ENCODE measurements at regions of chr3 and their contacts with region 1.

Region 1: GRCh38 chr3:113136071-113136470 is 75.3 kb upstream of the BOC start:
- DNase-seq: no peak
- CTCF ChIP-seq: peak; percentile 24

Region 2: DNA sequence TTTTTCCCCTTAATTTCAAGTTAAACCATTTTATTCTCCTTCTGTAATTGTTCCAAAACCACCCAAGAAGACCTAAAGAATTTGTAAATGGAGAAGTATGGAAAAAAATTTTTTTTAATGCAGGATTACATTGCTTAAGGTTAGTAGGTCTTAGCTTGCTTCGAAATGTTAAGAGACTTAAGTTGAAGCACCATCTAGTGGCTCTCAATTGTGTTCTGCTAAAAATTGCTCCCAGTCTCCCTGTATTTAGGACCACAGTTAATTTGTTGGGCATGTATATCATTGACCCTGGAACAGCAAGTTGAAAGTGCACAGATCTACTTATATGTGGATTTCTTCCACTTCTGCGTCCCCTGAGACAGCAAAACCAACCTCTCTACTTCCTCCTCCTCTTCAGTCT is 321.8 kb before region 1 on chr3:
- CTCF ChIA-PET with region 1: no interaction called
- POLR2A ChIA-PET with region 1: no interaction called
- DNase-seq: no peak
- CTCF ChIP-seq: peak; percentile 4

Region 3: GRCh38 chr3:113148286-113148685 is 12.2 kb after region 1 on chr3:
- CTCF ChIA-PET with region 1: interaction called, 10 read pairs
- POLR2A ChIA-PET with region 1: no interaction called
- DNase-seq: no peak
- CTCF ChIP-seq: no peak

Region 4: DNA sequence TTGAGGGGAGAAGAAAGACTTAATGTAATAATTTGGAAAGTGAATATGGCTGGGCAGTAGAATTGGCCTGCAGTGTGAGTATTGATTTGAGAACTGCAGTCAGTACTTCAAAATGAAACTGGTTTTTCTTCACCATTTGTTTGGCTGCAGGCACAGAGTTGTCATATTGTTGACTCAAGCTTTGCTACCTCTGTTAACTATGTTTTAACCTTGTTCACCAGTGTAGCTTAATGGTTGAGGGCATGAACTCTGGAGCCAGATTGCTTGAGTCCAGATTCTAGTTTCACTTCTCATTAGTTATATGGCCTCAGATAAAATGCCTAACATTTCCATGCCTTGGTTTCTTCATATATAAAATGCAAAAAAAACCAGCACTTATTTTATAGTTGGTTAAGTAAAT is 241.1 kb after region 1 on chr3:
- CTCF ChIA-PET with region 1: no interaction called
- POLR2A ChIA-PET with region 1: no interaction called
- DNase-seq: peak; percentile 10
- CTCF ChIP-seq: no peak

Measured in GM10248 (cell line).